Activated naive CD4-positive, alpha-beta T cell treated with anti-CD3 and anti-CD28 coated beads for 36 hours (primary cell): ENCODE measurements at regions of chr5 and their contacts with region 1.

Region 1: DNA sequence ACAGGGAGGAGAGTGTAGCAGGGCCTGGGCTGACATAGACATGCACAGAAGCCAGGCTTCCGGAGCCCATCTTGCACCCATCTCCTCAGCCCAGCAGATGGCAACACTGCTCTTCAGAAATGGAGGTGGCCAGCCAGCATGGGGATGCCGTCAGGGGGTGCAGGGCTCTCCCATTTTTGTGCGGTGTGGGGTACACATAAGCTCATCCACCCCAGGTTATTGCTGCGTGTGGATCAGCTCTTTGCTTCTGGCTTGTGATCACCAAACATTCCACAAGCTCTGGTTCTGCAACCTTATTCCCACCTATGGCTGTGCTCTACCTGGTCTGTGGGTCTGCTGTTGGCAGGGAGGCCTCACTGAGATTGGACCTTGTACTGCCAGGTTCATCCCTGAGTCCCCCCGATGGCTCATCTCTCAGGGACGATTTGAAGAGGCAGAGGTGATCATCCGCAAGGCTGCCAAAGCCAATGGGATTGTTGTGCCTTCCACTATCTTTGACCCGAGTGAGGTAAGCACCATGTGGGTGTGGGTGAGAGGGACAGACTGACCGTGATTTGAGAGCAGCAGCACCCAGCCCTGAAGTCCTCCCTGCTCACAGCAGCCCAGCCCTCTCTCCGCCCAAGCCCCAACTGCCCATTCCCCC is 17.3 kb downstream of the SLC22A5 start:
- DNase-seq: peak; percentile 88
- H3K4me3 Mint-ChIP-seq: no peak overlapping the region
- H3K27ac Mint-ChIP-seq: peak overlapping the region; percentile 69
- H3K4me1 Mint-ChIP-seq: peaks cover 40% of the 10 kb centered on the region
- H3K27me3 Mint-ChIP-seq: no peaks in the 10 kb centered on the region

Region 2: GRCh38 chr5:131776450-131776849 is 610.3 kb before region 1 on chr5:
- CTCF ChIA-PET with region 1: no interaction called
- intact Hi-C with region 1: no loop called
- DNase-seq: no peak
- H3K4me3 Mint-ChIP-seq: no peak overlapping the region
- H3K27ac Mint-ChIP-seq: no peak overlapping the region
- H3K4me1 Mint-ChIP-seq: peaks cover 23% of the 10 kb centered on the region
- H3K27me3 Mint-ChIP-seq: no peaks in the 10 kb centered on the region

Region 3: GRCh38 chr5:132050136-132050535 is 336.6 kb before region 1 on chr5:
- CTCF ChIA-PET with region 1: no interaction called
- intact Hi-C with region 1: no loop called
- DNase-seq: no peak
- H3K4me3 Mint-ChIP-seq: no peak overlapping the region
- H3K27ac Mint-ChIP-seq: no peak overlapping the region
- H3K4me1 Mint-ChIP-seq: no peaks in the 10 kb centered on the region
- H3K27me3 Mint-ChIP-seq: no peaks in the 10 kb centered on the region

Region 4: DNA sequence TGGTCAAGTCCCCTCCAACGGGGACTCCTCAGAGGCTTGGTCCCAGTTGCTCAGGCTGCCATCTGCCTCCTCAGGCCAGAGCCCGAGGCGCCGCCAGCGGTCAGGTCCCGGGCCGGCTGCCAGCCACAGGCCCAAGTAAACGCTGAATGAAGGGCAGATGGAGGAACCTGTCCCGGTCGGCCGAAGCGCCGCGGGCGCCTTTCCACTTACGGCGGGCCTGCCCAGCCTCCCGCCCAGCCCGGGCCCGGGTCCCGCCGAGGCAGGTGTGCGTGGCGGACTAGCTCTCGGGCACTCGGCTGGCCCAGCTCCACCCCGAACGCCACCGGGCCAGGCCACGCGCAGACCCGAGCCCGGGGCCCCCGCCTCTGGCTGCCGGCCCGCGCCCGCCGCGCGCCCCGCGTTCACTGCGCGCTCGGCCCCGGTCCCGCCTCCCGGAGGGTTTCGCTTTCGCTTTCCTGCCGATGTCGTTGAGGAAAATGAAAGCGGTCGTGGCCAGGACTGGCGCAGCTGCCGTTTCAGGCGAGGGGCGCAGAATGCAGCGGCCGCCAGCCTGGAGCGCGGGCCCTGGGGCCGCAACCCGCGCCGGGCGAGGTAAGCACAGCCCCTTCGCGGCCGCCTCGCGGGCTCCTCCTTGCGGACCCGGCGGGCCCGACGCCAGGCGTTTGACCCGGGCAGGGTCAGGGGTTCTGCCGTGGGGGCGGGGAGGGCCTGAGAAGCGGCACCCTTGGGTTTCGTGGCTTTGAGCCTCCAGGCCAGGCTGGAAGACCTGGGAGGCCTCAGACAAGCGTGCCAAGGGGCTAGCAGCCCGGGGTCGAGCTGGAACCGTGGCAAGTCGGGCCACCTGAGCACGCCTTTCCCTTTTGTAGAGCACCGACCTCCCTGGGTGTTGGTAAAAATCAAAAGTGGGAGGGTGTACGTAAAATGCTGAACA is 24.0 kb after region 1 on chr5:
- CTCF ChIA-PET with region 1: interaction called, 14 read pairs
- intact Hi-C with region 1: loop called (anchors 1 kb)
- DNase-seq: peak; percentile 87
- H3K4me3 Mint-ChIP-seq: peak overlapping the region; percentile 90
- H3K27ac Mint-ChIP-seq: peak overlapping the region; percentile 99
- H3K4me1 Mint-ChIP-seq: peaks cover 68% of the 10 kb centered on the region
- H3K27me3 Mint-ChIP-seq: no peaks in the 10 kb centered on the region

Region 5: GRCh38 chr5:132466433-132467286 is 79.9 kb after region 1 on chr5:
- CTCF ChIA-PET with region 1: interaction called, 10 read pairs
- intact Hi-C with region 1: no loop called
- DNase-seq: peak; percentile 72
- H3K4me3 Mint-ChIP-seq: peak overlapping the region; percentile 49
- H3K27ac Mint-ChIP-seq: peak overlapping the region; percentile 16
- H3K4me1 Mint-ChIP-seq: peaks cover 74% of the 10 kb centered on the region
- H3K27me3 Mint-ChIP-seq: no peaks in the 10 kb centered on the region

Region 6: DNA sequence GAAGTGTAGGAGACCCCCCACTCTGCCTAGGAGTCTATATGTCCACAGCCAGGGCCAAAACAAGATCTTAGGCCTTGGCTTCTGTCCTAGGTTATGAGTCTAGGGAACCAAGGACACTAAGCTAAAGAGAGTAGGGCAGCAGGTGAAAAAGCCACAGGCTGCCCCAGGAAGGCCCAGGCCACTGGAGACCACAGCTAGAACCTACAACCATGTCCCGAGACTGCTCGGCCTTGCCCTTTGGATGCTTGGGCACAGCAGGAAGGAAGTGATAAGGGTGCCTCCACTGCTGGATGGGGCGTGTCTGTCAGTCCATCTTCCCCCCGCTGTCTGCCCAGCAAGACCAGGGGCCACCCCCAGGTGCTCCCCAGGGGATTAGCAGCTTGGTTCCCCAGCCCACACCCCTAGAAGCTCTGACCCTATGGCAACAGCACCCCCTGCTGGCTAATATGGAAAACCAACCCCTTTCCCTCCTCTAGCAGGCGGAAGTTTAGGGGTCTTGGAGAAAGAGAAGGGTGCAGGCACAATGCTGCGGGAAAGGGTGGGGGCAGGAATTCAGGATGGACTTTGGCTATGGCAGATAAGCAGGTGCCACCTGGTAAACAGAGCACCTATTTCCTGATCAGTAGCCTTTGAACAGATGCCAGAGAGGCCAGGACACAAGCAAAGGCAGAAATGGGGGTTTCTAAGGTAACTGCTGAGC is 114.3 kb after region 1 on chr5:
- CTCF ChIA-PET with region 1: interaction called, 466 read pairs
- intact Hi-C with region 1: loop called (anchors 1 kb)
- DNase-seq: peak; percentile 86
- H3K4me3 Mint-ChIP-seq: no peak overlapping the region
- H3K27ac Mint-ChIP-seq: no peak overlapping the region
- H3K4me1 Mint-ChIP-seq: peaks cover 19% of the 10 kb centered on the region
- H3K27me3 Mint-ChIP-seq: no peaks in the 10 kb centered on the region

Region 7: GRCh38 chr5:132662925-132663770 is 276.4 kb after region 1 on chr5:
- CTCF ChIA-PET with region 1: no interaction called
- intact Hi-C with region 1: no loop called
- DNase-seq: peak; percentile 58
- H3K4me3 Mint-ChIP-seq: no peak overlapping the region
- H3K27ac Mint-ChIP-seq: no peak overlapping the region
- H3K4me1 Mint-ChIP-seq: peaks cover 13% of the 10 kb centered on the region
- H3K27me3 Mint-ChIP-seq: peaks cover 5% of the 10 kb centered on the region

Region 8: DNA sequence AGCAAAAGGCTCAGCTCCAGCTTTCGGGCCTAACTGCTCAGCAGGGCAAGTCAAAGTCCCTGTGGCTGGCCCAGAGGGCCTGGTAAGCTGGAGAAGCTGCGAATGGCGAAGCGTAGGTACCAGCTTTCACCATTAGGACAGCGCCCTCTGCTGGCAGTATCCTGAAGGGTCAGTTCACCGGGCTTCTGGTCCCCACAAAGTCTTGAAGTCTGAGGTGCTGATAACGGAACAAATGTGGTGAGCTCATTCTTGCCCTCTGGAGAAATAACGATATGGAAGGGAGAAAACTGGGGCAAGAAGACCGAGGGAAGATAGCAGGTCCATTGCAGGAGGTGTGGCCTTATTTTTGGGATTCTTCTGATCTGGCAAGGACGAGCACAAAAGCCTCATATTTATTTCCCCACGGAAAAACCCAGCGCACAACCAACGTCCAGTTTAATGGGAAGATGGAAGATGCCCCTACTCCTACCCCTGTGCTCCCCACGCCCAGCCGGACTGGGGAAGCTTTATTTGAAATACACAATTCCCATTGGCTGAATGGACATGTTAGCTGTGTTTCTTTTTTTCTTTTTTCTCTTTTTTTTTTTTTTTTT is 433.5 kb after region 1 on chr5:
- CTCF ChIA-PET with region 1: interaction called, 18 read pairs
- intact Hi-C with region 1: loop called (anchors 1 kb)
- DNase-seq: peak; percentile 97
- H3K4me3 Mint-ChIP-seq: peak overlapping the region; percentile 41
- H3K27ac Mint-ChIP-seq: no peak overlapping the region
- H3K4me1 Mint-ChIP-seq: peaks cover 12% of the 10 kb centered on the region
- H3K27me3 Mint-ChIP-seq: peaks cover 29% of the 10 kb centered on the region